ENCODE measurements at regions of chr7 and their contacts with region 1.

Region 1: DNA sequence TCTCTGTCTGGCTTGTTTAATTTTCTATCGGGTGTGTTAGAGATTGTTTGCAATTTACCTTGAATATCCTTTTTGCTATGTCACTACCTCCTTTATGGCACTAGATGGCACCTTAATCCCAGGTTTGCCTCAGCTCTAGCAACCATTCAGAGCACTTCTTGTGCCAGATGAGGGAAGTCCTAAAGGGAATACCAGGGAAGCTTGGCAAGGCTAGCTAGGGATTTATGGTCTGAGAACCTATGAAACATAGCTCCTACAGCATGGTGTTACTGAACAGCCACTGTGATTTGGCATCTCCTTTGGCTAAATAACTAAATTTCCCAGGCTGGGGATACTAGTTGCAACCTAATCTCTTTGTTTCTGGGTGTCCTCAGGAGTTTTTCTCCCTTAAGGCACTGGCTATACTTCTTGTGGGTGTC is 69.0 kb upstream of the VOPP1 start:
- DNase-seq: peak; percentile 56 to 84 (median 70)
- ATAC-seq: peak; percentile 98
- H3K4me3 ChIP-seq: no peak overlapping the region
- H3K27ac ChIP-seq: no peak overlapping the region
- H3K4me1 ChIP-seq: peaks cover 13% of the 10 kb centered on the region
- H3K27me3 ChIP-seq: no peaks in the 10 kb centered on the region
- CTCF ChIP-seq: peak; percentile 31 to 99 (median 98)
- POLR2A ChIP-seq: no peak

Region 2: DNA sequence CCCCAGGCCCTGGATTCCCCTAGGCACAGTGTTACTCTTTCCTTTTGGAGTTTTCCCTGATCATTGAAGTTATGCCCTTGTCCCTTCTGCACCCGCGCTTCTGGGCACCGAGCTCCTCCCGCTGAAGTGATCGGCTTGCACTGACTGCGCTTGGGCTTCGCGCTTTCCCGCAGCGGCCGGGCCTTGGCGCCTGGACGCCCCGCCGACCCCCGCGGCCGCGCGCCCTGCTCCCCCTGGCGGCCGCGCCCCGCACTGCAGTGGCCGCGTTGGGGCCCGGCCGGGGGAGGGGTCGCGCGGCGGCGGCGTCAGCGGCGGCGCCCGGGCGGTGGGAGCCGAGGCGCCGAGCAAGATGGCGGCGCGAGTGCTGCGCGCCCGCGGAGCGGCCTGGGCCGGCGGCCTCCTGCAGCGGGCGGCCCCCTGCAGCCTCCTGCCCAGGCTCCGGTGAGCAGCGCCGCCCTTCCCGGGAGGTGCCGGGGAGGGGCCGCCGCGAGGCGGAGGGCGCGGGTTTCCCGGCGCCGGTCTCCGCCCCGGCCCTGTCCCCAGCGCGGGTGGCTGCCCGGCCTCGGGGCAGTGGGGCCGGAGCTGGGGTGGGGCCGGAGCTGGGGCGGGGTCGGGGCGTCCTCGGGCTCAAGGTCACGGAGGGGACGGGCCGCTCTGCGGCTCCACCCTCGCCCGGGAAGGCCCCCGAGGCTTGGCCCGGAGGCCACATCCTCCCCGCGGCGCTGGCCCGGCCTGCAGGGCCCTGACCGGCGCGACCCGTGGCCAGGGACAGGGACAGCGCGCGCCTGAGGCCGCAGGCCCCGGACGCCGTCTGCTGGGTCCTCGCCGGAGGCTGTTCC is 323.2 kb after region 1 on chr7 and contains the start of gene NIPSNAP2:
- intact Hi-C with region 1: loop called (anchors 10 kb)
- DNase-seq: peak; percentile 84 to 87 (median 86)
- ATAC-seq: peak; percentile 90
- H3K4me3 ChIP-seq: peak within 1 kb of the TSS; percentile 41 to 44
- H3K27ac ChIP-seq: peak within 1 kb of the TSS; percentile 92 to 96 (median 94)
- H3K4me1 ChIP-seq: peaks cover 27% of the 10 kb centered on the region
- H3K27me3 ChIP-seq: no peaks in the 10 kb centered on the region
- CTCF ChIP-seq: peak in 5 of 7 experiments; percentile 5 to 99 (median 83)
- POLR2A ChIP-seq: peak; percentile 34 to 72 (median 50)
- total RNA-seq, gene NIPSNAP2: 42.5 to 51.6 TPM

Measured in body of pancreas (tissue), 4 donors.